ENCODE measurements at regions of chr7 and their contacts with region 1.

Region 1: GRCh38 chr7:151459726-151460473 is 20.0 kb upstream of the CRYGN start:
- DNase-seq: peak; percentile 73 to 91 (median 78)
- ATAC-seq: peak; percentile 88 to 90 (median 90)
- H3K4me3 ChIP-seq: peak overlapping the region in 9 of 12 donors; percentile 20 to 40 (median 27)
- H3K27ac ChIP-seq: peak overlapping the region; percentile 65 to 97 (median 92)
- H3K4me1 ChIP-seq: peaks cover 3 to 34% (median 22%) of the 10 kb centered on the region in 12 donors
- H3K27me3 ChIP-seq: no peaks in the 10 kb centered on the region
- CTCF ChIP-seq: peak in 8 of 12 donors; percentile 5 to 50 (median 28)
- POLR2A ChIP-seq: peak in 1 of 2 donors; percentile 13

Region 2: GRCh38 chr7:151503902-151504714 is 44.2 kb after region 1 on chr7:
- intact Hi-C with region 1: loop called in 1 of 10 experiments (anchors 5 kb)
- DNase-seq: peak in 1 of 5 donors; percentile 60
- ATAC-seq: peak; percentile 36 to 94 (median 76)
- H3K4me3 ChIP-seq: no peak overlapping the region
- H3K27ac ChIP-seq: peak overlapping the region in 6 of 12 donors; percentile 5 to 78 (median 26)
- H3K4me1 ChIP-seq: peaks cover 2 to 66% (median 44%) of the 10 kb centered on the region in 12 donors
- H3K27me3 ChIP-seq: no peaks in the 10 kb centered on the region
- CTCF ChIP-seq: no peak
- POLR2A ChIP-seq: no peak

Region 3: GRCh38 chr7:151511946-151512345 is 52.0 kb after region 1 on chr7:
- intact Hi-C with region 1: loop called in 5 of 10 experiments (anchors 5 kb)
- DNase-seq: no peak
- ATAC-seq: no peak
- H3K4me3 ChIP-seq: no peak overlapping the region
- H3K27ac ChIP-seq: peak overlapping the region in 4 of 12 donors; percentile 12 to 98 (median 18)
- H3K4me1 ChIP-seq: peaks cover 2 to 98% (median 64%) of the 10 kb centered on the region in 12 donors
- H3K27me3 ChIP-seq: no peaks in the 10 kb centered on the region
- CTCF ChIP-seq: no peak
- POLR2A ChIP-seq: no peak

Region 4: DNA sequence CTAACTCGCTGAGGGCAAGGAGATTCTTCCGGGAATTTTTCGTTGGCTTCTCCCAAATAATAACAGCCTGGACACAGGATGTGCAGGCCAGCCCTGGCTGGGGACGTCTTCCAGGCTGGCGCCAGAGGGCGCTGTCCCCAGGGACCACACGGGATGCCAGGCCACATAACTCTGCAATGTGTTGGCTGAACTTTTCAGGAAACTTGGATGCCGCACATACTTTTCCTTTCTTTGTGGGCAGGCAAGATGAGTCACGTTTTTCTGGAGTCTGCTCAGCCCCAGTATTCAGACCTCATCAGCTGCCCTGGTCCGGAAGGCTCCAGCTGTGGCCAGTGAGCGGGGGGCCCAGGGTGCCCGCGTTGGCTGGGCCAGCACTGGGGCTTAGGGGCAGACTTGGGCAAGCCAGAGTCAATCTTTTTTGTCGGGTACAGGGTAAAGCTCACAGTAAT is 294.3 kb after region 1 on chr7:
- intact Hi-C with region 1: loop called in 5 of 10 experiments (anchors 5 to 10 kb)
- DNase-seq: peak; percentile 79 to 88 (median 81)
- ATAC-seq: peak; percentile 86 to 93 (median 92)
- H3K4me3 ChIP-seq: no peak overlapping the region
- H3K27ac ChIP-seq: peak overlapping the region; percentile 8 to 94 (median 76)
- H3K4me1 ChIP-seq: peaks cover 0 to 43% (median 24%) of the 10 kb centered on the region in 12 donors
- H3K27me3 ChIP-seq: no peaks in the 10 kb centered on the region
- CTCF ChIP-seq: peak; percentile 72 to 91 (median 84)
- POLR2A ChIP-seq: no peak

Measured in heart left ventricle (tissue), 16 donors.